HCT116 (cell line): ENCODE measurements at regions of chr1 and their contacts with region 1.

Region 1: GRCh38 chr1:206808615-206809014 is 36.3 kb upstream of the IL10 start:
- DNase-seq: no peak
- ATAC-seq: peak; percentile 68
- H3K4me3 ChIP-seq: no peak overlapping the region
- H3K27ac ChIP-seq: no peak overlapping the region
- H3K4me1 ChIP-seq: no peaks in the 10 kb centered on the region
- H3K27me3 ChIP-seq: peaks cover 12% of the 10 kb centered on the region
- CTCF ChIP-seq: peak; percentile 24 to 44 (median 38); a peak in 5 of 6 replicates
- POLR2A ChIP-seq: no peak
- RAD21 ChIP-seq: peak; percentile 60

Region 2: DNA sequence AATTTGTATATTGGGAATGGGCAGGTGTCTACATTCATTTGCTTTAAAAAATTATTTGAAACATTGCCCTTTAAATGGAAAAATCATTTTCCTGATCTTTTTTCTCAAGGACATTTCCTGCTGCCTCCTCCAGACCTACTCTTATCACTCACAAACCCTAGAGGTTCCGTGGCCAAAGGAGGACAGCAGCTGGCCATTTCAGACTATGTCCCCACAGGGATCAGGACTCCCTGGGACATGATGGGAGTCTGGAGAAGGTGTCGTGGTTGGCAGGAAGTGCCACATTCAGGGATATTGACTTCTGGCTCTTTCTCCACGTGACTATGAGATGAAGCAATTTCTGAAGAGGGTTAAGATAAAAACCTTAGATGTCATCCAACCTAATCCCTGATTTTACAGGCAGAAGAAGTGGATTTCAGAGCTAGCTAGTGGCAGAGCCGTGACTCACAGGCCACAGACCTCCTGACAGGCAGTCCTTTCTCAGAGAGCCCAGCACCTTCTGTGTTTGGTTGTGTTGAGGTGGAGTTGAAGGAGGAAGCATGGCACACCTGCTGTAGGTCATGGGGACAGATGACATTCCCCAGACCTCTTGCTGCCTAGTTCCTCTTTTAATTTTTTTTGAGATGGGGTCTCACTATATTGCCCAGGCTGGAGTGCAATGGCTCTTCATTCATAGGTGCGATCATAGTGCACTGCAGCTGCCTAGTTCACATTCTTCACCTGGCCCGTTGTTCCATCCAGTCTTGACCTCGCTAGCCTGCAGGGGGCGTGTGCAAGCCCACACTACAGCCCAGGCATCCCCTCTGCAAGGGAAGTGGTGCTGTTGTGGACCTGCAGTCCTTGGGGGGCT is 10.9 kb before region 1 on chr1:
- CTCF ChIA-PET with region 1: interaction called, 19 read pairs
- POLR2A ChIA-PET with region 1: no interaction called
- RAD21 ChIA-PET with region 1: no interaction called
- intact Hi-C with region 1: no loop called
- DNase-seq: no peak
- ATAC-seq: peak; percentile 97
- H3K4me3 ChIP-seq: no peak overlapping the region
- H3K27ac ChIP-seq: no peak overlapping the region
- H3K4me1 ChIP-seq: no peaks in the 10 kb centered on the region
- H3K27me3 ChIP-seq: no peaks in the 10 kb centered on the region
- CTCF ChIP-seq: peak; percentile 45 to 93 (median 79); a peak in 5 of 6 replicates
- POLR2A ChIP-seq: no peak
- RAD21 ChIP-seq: peak; percentile 32

Region 3: GRCh38 chr1:206925106-206925736 is 116.6 kb after region 1 on chr1:
- CTCF ChIA-PET with region 1: no interaction called
- POLR2A ChIA-PET with region 1: no interaction called
- RAD21 ChIA-PET with region 1: no interaction called
- intact Hi-C with region 1: no loop called
- DNase-seq: no peak
- ATAC-seq: peak; percentile 52; the same call in 1 of the 2 replicates
- H3K4me3 ChIP-seq: no peak overlapping the region
- H3K27ac ChIP-seq: no peak overlapping the region
- H3K4me1 ChIP-seq: peaks cover 0 to 9% of the 10 kb centered on the region in 2 experiments; a peak in 2 of 4 replicates
- H3K27me3 ChIP-seq: no peaks in the 10 kb centered on the region
- CTCF ChIP-seq: no peak
- POLR2A ChIP-seq: no peak
- RAD21 ChIP-seq: no peak

Region 4: DNA sequence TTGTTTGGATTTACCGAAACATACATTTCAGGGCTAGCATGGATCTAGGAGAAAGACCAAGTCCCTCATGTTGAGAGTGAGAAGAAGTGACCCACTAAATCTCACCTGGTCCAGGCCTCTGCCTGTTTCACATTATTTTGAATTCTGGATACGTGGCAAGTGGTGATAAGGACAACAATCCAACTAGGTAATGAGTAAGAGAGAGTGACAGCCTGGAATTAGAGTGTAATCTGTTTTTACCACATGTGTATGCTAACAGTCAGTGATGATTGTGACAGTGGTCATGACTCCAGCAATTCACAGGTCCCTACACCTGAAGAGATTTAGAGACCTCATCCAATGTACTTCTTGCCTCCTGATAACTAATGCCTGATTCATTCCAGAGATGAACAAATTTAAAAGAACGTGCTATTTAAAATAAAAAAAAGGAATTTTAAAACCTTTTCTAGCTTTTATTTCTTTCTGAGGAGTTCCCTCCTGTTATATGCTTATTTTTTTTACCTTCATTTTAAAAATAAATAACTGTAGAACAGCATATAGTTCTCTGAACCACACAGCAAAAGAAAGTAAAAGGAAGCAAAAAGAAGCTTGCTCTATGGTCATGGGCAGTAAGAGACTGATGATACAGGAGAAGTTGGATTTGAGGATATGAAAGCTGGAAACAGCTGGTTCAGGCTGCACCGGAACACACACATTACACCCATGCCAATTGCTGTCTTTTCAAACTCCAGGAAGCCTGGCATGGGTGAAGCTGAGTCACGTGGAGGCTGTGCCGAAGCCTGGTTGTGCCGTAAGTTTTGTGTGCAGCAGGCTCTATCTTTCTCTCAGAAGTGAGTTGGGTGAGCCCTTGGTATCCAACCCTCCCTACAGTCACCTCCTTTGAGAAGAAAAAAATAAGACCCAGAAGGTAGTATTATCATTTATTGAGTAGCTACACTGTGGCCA is 209.3 kb after region 1 on chr1:
- CTCF ChIA-PET with region 1: no interaction called
- POLR2A ChIA-PET with region 1: no interaction called
- RAD21 ChIA-PET with region 1: no interaction called
- intact Hi-C with region 1: no loop called
- DNase-seq: no peak
- ATAC-seq: no peak
- H3K4me3 ChIP-seq: no peak overlapping the region
- H3K27ac ChIP-seq: no peak overlapping the region
- H3K4me1 ChIP-seq: peaks cover 15 to 63% of the 10 kb centered on the region in 2 experiments
- H3K27me3 ChIP-seq: no peaks in the 10 kb centered on the region
- CTCF ChIP-seq: no peak
- POLR2A ChIP-seq: no peak
- RAD21 ChIP-seq: no peak